B cell (primary cell): ENCODE measurements at regions of chr16 and their contacts with region 1.

Region 1: GRCh38 chr16:88650749-88651275 is at the start of gene CYBA:
- DNase-seq: peak; percentile 92
- ATAC-seq: peak; percentile 77
- H3K4me3 ChIP-seq: peak within 1 kb of the TSS; percentile 73 to 98 (median 92)
- H3K4me3 Mint-ChIP-seq: peak within 1 kb of the TSS; percentile 96
- H3K27ac ChIP-seq: peak within 1 kb of the TSS; percentile 98 to 99
- H3K27ac Mint-ChIP-seq: peak within 1 kb of the TSS; percentile 98
- H3K4me1 ChIP-seq: peaks cover 46 to 65% of the 10 kb centered on the region in 2 donors
- H3K4me1 Mint-ChIP-seq: peaks cover 43% of the 10 kb centered on the region
- H3K27me3 ChIP-seq: no peaks in the 10 kb centered on the region
- H3K27me3 Mint-ChIP-seq: no peaks in the 10 kb centered on the region
- CTCF ChIP-seq: no peak
- total RNA-seq, gene CYBA: 698 and 701 TPM in 2 replicates

Region 2: DNA sequence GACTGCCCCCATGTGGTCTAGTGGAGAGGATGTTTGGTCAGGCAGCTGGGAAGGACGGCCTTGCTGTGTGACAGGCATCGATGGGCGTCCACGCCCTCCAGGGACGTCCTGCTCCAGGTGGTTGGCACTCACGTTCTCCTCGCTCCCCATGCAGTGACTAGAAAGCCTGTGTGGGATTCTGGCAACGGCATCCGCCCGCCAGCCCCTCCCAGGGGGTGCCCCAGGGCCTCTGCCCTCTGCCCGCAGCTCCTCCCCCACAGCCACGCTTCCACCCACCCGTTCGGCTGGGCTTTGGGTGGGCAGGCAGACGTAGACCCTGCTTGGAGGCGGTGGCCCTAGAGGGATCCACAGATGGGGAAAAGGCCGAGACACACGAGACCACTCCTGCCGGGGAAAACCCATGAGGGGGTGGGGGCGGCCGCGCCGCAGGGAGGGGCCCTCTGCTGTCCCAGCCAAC is 17.1 kb before region 1 on chr16:
- CTCF ChIA-PET with region 1: interaction called, 7 read pairs
- POLR2A ChIA-PET with region 1: interaction called, 32 read pairs
- intact Hi-C with region 1: loop called (anchors 1 kb)
- DNase-seq: no peak
- ATAC-seq: no peak
- H3K4me3 ChIP-seq: peak overlapping the region in 4 of 5 experiments; percentile 62 to 78 (median 68)
- H3K4me3 Mint-ChIP-seq: peak overlapping the region; percentile 85
- H3K27ac ChIP-seq: peak overlapping the region; percentile 81 to 87
- H3K27ac Mint-ChIP-seq: peak overlapping the region; percentile 92
- H3K4me1 ChIP-seq: peaks cover 37 to 56% of the 10 kb centered on the region in 2 donors
- H3K4me1 Mint-ChIP-seq: peaks cover 45% of the 10 kb centered on the region
- H3K27me3 ChIP-seq: peaks cover 0 to 6% (median 0%) of the 10 kb centered on the region in 4 experiments
- H3K27me3 Mint-ChIP-seq: no peaks in the 10 kb centered on the region
- CTCF ChIP-seq: no peak

Region 3: DNA sequence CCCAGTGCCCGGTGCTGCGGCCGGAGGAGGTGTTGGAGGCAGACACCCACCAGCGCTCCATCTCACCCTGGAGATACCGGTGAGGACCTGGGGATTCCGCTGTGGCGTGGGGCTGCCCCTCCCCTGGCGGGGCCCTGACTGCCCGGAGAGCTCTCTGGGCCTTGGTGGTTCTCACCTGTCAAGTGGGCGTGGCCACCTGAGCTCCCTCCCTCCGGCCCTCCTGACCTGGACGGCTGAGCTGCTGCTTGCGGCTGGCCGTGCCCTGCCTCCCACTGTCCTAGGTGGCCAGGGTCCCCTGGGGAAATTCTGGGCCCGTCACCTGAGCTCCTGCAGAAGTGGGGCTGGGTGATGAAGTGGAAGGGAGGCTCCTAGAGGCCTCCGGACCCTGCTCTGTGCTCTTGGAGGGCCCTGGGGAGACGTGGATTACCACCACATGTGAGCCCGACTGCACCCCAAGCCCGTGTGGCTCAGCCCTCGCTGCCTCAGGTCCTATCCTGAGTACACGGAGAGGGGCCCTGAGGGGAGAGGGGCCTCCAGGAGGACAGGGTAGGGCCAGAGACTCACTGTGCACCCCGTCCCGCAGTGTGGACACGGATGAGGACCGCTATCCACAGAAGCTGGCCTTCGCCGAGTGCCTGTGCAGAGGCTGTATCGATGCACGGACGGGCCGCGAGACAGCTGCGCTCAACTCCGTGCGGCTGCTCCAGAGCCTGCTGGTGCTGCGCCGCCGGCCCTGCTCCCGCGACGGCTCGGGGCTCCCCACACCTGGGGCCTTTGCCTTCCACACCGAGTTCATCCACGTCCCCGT is 11.4 kb before region 1 on chr16:
- CTCF ChIA-PET with region 1: interaction called, 7 read pairs
- POLR2A ChIA-PET with region 1: interaction called, 32 read pairs
- intact Hi-C with region 1: loop called (anchors 1 kb)
- DNase-seq: peak; percentile 59
- ATAC-seq: peak; percentile 23
- H3K4me3 ChIP-seq: peak overlapping the region in 4 of 5 experiments; percentile 8 to 17 (median 12)
- H3K4me3 Mint-ChIP-seq: peak overlapping the region; percentile 74
- H3K27ac ChIP-seq: no peak overlapping the region
- H3K27ac Mint-ChIP-seq: peak overlapping the region; percentile 60
- H3K4me1 ChIP-seq: peaks cover 55 to 68% of the 10 kb centered on the region in 2 donors
- H3K4me1 Mint-ChIP-seq: peaks cover 74% of the 10 kb centered on the region
- H3K27me3 ChIP-seq: peaks cover 0 to 8% (median 0%) of the 10 kb centered on the region in 4 experiments
- H3K27me3 Mint-ChIP-seq: no peaks in the 10 kb centered on the region
- CTCF ChIP-seq: no peak

Region 4: GRCh38 chr16:88662843-88663606 is 12.2 kb after region 1 on chr16 and contains the start of gene MVD:
- CTCF ChIA-PET with region 1: interaction called, 3 read pairs
- POLR2A ChIA-PET with region 1: interaction called, 6 read pairs
- intact Hi-C with region 1: loop called (anchors 1 kb)
- DNase-seq: peak; percentile 97
- ATAC-seq: peak; percentile 96
- H3K4me3 ChIP-seq: peak within 1 kb of the TSS; percentile 49 to 89 (median 88)
- H3K4me3 Mint-ChIP-seq: peak within 1 kb of the TSS; percentile 92
- H3K27ac ChIP-seq: peak within 1 kb of the TSS; percentile 62 to 88
- H3K27ac Mint-ChIP-seq: peak within 1 kb of the TSS; percentile 93
- H3K4me1 ChIP-seq: peaks cover 18 to 30% of the 10 kb centered on the region in 2 donors
- H3K4me1 Mint-ChIP-seq: peaks cover 31% of the 10 kb centered on the region
- H3K27me3 ChIP-seq: no peaks in the 10 kb centered on the region
- H3K27me3 Mint-ChIP-seq: no peaks in the 10 kb centered on the region
- CTCF ChIP-seq: no peak
- total RNA-seq, gene MVD: 84.5 and 95.4 TPM in 2 replicates

Region 5: GRCh38 chr16:88700636-88701482 is 50.0 kb after region 1 on chr16:
- CTCF ChIA-PET with region 1: interaction called, 6 read pairs
- POLR2A ChIA-PET with region 1: interaction called, 6 read pairs
- intact Hi-C with region 1: loop called (anchors 1 kb)
- DNase-seq: peak; percentile 91
- ATAC-seq: peak; percentile 79
- H3K4me3 ChIP-seq: peak overlapping the region; percentile 32 to 69 (median 54)
- H3K4me3 Mint-ChIP-seq: peak overlapping the region; percentile 84
- H3K27ac ChIP-seq: peak overlapping the region; percentile 84 to 91
- H3K27ac Mint-ChIP-seq: peak overlapping the region; percentile 96
- H3K4me1 ChIP-seq: peaks cover 61 to 83% of the 10 kb centered on the region in 2 donors
- H3K4me1 Mint-ChIP-seq: peaks cover 70% of the 10 kb centered on the region
- H3K27me3 ChIP-seq: no peaks in the 10 kb centered on the region
- H3K27me3 Mint-ChIP-seq: no peaks in the 10 kb centered on the region
- CTCF ChIP-seq: no peak

Region 6: GRCh38 chr16:88706288-88706964 is 55.6 kb after region 1 on chr16 and contains the starts of genes CTU2 and RNF166:
- CTCF ChIA-PET with region 1: interaction called, 6 read pairs
- POLR2A ChIA-PET with region 1: interaction called, 6 read pairs
- intact Hi-C with region 1: loop called (anchors 1 kb)
- DNase-seq: peak; percentile 95
- ATAC-seq: peak; percentile 70
- H3K4me3 ChIP-seq: peak within 1 kb of the TSS; percentile 71 to 95 (median 80)
- H3K4me3 Mint-ChIP-seq: peak within 1 kb of the TSS; percentile 85
- H3K27ac ChIP-seq: peak within 1 kb of the TSS; percentile 84 to 91
- H3K27ac Mint-ChIP-seq: peak within 1 kb of the TSS; percentile 92
- H3K4me1 ChIP-seq: peaks cover 48 to 53% of the 10 kb centered on the region in 2 donors
- H3K4me1 Mint-ChIP-seq: peaks cover 47% of the 10 kb centered on the region
- H3K27me3 ChIP-seq: no peaks in the 10 kb centered on the region
- H3K27me3 Mint-ChIP-seq: no peaks in the 10 kb centered on the region
- CTCF ChIP-seq: no peak
- total RNA-seq, gene CTU2: 18.4 and 19.3 TPM in 2 replicates
- total RNA-seq, gene RNF166: 64.1 and 75.8 TPM in 2 replicates